GM12878 (cell line): ENCODE measurements at regions of chr20 and their contacts with region 1.

Region 1: GRCh38 chr20:3312940-3313682 is 74.1 kb upstream of the SLC4A11 start:
- DNase-seq: no peak
- ATAC-seq: no peak
- H3K4me3 ChIP-seq: no peak overlapping the region
- H3K27ac ChIP-seq: no peak overlapping the region
- H3K4me1 ChIP-seq: no peaks in the 10 kb centered on the region
- H3K27me3 ChIP-seq: no peaks in the 10 kb centered on the region
- CTCF ChIP-seq: no peak
- EP300 ChIP-seq: no peak
- POLR2A ChIP-seq: no peak
- RAD21 ChIP-seq: no peak

Region 2: GRCh38 chr20:2984956-2985661 is 328.0 kb before region 1 on chr20:
- CTCF ChIA-PET with region 1: no interaction called
- POLR2A ChIA-PET with region 1: no interaction called
- RAD21 ChIA-PET with region 1: no interaction called
- SMC1A ChIA-PET with region 1: no interaction called
- in situ Hi-C with region 1: no loop called
- intact Hi-C with region 1: no loop called
- DNase-seq: no peak
- ATAC-seq: no peak
- H3K4me3 ChIP-seq: no peak overlapping the region
- H3K27ac ChIP-seq: no peak overlapping the region
- H3K4me1 ChIP-seq: peaks cover 15% of the 10 kb centered on the region
- H3K27me3 ChIP-seq: no peaks in the 10 kb centered on the region
- CTCF ChIP-seq: no peak
- EP300 ChIP-seq: no peak
- POLR2A ChIP-seq: no peak
- RAD21 ChIP-seq: no peak

Region 3: GRCh38 chr20:3115190-3116107 is 197.7 kb before region 1 on chr20:
- CTCF ChIA-PET with region 1: interaction called, 12 read pairs
- POLR2A ChIA-PET with region 1: no interaction called
- RAD21 ChIA-PET with region 1: no interaction called
- SMC1A ChIA-PET with region 1: interaction called, 3 read pairs
- in situ Hi-C with region 1: no loop called
- intact Hi-C with region 1: loop called (anchors 5 kb)
- DNase-seq: peak; percentile 2
- ATAC-seq: peak; percentile 71
- H3K4me3 ChIP-seq: no peak overlapping the region
- H3K27ac ChIP-seq: no peak overlapping the region
- H3K4me1 ChIP-seq: no peaks in the 10 kb centered on the region
- H3K27me3 ChIP-seq: no peaks in the 10 kb centered on the region
- CTCF ChIP-seq: peak; percentile 67 to 74 (median 70)
- EP300 ChIP-seq: no peak
- POLR2A ChIP-seq: no peak
- RAD21 ChIP-seq: peak; percentile 65

Region 4: GRCh38 chr20:3218307-3218988 is 94.7 kb before region 1 on chr20:
- CTCF ChIA-PET with region 1: interaction called, 31 read pairs
- POLR2A ChIA-PET with region 1: interaction called, 3 read pairs
- RAD21 ChIA-PET with region 1: interaction called, 4 read pairs
- SMC1A ChIA-PET with region 1: interaction called, 3 read pairs
- in situ Hi-C with region 1: no loop called
- intact Hi-C with region 1: loop called (anchors 1 kb)
- DNase-seq: no peak
- ATAC-seq: peak; percentile 98
- H3K4me3 ChIP-seq: no peak overlapping the region
- H3K27ac ChIP-seq: no peak overlapping the region
- H3K4me1 ChIP-seq: peaks cover 15% of the 10 kb centered on the region
- H3K27me3 ChIP-seq: no peaks in the 10 kb centered on the region
- CTCF ChIP-seq: peak; percentile 78 to 89 (median 87)
- EP300 ChIP-seq: no peak
- POLR2A ChIP-seq: no peak
- RAD21 ChIP-seq: peak; percentile 76